Left cardiac atrium (tissue), 4 donors: ENCODE measurements at regions of chr5 and their contacts with region 1.

Region 1: DNA sequence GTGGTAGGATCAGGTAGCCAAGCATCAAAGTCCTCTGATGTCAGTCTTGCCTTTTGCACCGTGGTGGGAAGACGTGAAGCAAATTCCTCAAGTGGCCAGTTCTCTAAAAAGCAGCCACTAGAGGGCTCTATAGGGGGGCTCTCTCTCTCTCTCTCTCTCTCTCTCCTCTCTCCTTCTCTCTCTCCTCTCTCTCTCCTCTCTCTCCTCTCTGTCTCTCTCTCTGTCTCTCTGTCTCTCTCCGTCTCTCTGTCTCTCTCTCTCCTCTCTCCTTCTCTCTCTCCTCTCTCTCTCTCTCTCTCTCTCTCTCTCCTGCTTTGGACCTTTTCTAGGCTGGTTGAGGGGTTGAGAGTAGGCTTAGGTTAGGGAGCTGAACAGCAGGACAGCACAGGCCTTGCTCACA is 13.9 kb upstream of the OSMR start:
- DNase-seq: no peak
- ATAC-seq: peak; percentile 50 to 64

Region 2: DNA sequence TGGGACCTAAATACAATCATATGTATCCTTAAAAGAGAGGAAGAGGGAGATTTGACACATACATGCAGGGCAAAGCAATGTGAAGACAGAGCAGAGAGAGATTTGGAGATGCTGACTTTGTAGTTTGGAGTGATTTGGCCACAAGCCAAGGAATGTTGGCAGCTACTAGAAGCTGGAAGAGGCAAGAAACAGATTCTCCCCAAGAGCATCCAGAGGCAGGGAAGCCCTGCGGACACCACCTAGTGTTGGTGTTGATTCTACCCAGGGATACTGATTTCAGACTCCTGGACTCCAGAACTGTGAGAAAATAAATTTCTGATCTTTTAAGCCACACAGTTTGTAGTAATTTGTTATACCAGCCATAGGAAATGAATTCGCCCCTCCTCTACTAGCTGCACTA is 51.0 kb before region 1 on chr5:
- intact Hi-C with region 1: no loop called
- DNase-seq: peak; percentile 81
- ATAC-seq: peak; percentile 73 to 83

Region 3: DNA sequence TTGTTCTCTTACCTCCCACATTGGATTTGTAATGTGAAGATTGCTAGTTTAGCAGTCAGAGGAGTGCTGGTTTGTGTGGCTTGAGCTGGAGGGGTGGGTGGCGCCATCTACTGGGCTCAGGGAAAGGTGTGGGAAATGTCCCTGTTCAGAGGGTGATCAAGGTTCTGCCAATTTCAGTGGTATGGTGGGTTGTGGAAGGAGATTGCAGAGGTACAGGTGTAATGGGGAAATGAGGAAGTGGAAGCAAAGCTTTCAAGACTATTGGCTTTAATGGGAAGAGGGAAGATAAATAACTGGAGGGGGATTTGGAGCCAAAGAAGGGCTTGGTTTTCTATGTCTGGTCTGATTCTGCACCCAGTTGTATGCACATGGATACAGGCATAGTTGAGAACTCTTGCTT is 90.3 kb after region 1 on chr5:
- intact Hi-C with region 1: loop called in 1 of 2 experiments (anchors 5 kb)
- DNase-seq: peak; percentile 55
- ATAC-seq: peak; percentile 57 to 78